ENCODE measurements at regions of chr9 and their contacts with region 1.

Region 1: DNA sequence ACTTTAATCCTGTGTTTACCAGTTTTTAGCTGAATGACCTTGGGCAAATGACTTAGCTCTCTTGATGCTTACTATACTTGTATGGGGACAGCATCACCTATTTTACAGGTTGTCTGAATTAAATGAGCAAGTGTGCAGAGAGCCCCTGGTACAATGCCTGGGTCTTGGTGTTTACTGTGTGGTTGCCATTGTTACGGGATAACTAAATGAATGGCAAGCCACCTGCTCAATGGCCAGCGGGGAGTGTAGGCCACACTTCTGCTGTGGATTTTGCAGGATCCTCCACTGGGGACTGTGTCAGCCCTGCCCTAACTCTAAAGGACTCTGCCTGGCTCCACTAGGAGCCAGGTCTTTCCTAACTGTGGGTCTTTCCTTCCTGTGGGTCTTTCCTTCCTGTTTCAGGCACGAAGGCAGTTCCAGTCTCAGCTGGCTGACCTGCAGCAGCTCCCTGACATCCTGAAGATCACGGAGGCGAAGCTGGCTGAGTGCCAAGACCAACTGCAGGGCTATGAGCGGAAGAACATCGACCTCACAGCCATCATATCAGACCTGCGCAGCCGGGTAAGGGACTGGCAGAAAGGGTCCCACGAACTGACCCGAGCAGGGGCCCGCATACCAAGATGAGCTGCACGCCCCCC is 10.3 kb upstream of the GLE1 start:
- DNase-seq: peak; percentile 93 to 97 (median 97)
- H3K4me3 ChIP-seq: peak overlapping the region in 3 of 7 experiments; percentile 3 to 60 (median 42)
- H3K27ac ChIP-seq: peak overlapping the region; percentile 69 to 81
- H3K4me1 ChIP-seq: peaks cover 17 to 34% (median 30%) of the 10 kb centered on the region in 4 experiments
- H3K27me3 ChIP-seq: no peaks in the 10 kb centered on the region

Region 2: DNA sequence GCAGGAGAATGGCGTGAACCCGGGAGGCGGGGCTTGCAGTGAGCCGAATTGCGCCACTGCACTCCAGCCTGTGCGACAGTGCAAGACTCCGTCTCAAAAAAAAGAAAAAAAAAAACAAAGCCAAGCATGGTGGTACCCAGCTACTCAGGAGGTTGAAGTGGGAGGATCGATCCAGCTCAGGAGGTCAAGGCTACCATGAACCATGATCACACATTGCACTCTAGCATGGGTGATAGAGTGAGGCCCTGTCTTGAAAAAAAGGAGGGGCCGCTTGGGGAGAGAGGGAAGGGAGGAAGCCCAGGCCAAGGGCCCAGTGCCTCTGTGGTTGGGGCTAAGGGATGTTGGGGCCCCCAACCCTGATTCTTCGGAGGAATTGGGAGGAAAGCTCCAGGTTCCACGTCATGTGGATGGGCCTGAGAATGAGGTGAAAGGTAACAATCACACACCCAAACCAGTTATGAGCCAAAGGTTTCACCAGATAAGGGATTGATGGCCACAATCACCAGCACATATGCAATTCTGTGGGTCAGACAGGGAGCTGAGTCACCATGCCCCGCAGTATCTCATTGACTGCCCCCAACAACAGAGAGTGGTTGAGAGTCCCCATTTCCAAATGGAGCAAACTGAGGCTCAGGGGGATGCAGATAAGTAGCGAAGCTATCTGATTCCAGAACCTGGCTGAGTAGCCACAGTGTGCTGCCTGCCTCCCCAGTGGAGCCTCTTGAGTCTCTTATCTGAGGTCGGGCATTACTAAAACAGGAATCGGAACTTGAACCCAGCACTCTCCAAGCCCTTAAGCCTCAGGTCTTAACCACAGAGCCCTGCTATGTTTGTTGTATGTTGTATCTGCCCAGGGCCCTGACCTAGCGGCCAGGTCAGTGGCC is 197.6 kb before region 1 on chr9:
- CTCF ChIA-PET with region 1: no interaction called
- POLR2A ChIA-PET with region 1: no interaction called
- DNase-seq: peak in 1 of 3 donors; percentile 22
- H3K4me3 ChIP-seq: no peak overlapping the region
- H3K27ac ChIP-seq: no peak overlapping the region
- H3K4me1 ChIP-seq: peaks cover 0 to 6% (median 0%) of the 10 kb centered on the region in 4 experiments
- H3K27me3 ChIP-seq: no peaks in the 10 kb centered on the region

Region 3: DNA sequence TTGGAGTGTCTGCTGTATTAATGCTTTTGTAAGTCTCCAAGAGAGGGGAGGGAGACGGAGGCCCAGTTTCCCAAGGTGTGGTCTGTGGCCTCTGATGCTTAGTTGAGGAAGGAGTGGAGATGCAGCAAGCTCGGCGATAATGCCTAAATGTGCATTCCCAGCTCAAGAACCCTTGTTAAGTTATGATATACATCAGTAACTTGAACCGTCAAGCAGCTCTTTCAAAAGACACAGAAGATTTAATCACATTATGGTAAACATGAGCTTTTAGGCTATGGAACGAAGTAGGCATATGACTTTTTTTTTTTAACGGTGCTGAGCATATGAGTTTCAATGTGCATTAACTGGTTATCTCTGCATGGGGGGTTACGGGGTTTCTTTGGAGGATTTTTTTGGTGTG is 12.1 kb before region 1 on chr9:
- CTCF ChIA-PET with region 1: interaction called, 17 read pairs
- POLR2A ChIA-PET with region 1: no interaction called
- DNase-seq: no peak
- H3K4me3 ChIP-seq: no peak overlapping the region
- H3K27ac ChIP-seq: no peak overlapping the region
- H3K4me1 ChIP-seq: no peaks in the 10 kb centered on the region
- H3K27me3 ChIP-seq: no peaks in the 10 kb centered on the region

Region 4: DNA sequence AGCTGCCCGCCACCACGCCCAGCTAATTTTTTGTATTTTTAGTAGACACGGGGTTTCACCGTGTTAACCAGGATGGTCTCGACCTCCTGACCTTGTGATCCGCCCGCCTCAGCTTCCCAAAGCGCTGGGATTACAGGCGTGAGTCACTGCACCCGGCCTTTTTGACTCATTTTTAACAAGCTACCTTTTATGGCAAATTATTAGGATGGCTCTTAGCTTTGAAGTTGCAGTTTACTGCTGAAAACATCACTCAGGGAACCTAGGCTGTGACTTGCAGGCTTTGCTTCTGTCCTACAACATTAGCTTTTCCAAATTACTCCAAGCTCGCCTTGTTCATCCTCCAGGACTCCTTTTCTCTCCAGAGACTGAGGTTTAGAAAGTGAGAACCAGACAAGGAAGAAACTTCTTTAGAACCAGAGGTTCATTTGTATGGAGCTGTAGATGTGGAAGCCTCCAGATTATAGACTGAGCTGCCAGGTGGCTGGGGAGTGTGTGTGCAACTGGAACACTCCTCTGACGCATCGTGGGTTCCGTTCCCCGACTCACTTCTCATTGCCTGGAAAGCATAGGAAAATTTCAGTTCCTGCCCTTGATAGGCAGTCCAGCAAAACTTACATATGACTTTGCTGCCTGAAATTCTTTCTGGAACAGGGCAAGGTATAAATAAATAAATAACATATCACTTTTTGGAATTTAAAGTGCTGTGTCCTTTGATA is 34.4 kb after region 1 on chr9:
- CTCF ChIA-PET with region 1: no interaction called
- POLR2A ChIA-PET with region 1: no interaction called
- DNase-seq: no peak
- H3K4me3 ChIP-seq: no peak overlapping the region
- H3K27ac ChIP-seq: no peak overlapping the region
- H3K4me1 ChIP-seq: no peaks in the 10 kb centered on the region
- H3K27me3 ChIP-seq: no peaks in the 10 kb centered on the region

Region 5: GRCh38 chr9:128607642-128608350 is 113.6 kb after region 1 on chr9:
- CTCF ChIA-PET with region 1: no interaction called
- POLR2A ChIA-PET with region 1: no interaction called
- DNase-seq: no peak
- H3K4me3 ChIP-seq: no peak overlapping the region
- H3K27ac ChIP-seq: no peak overlapping the region
- H3K4me1 ChIP-seq: no peaks in the 10 kb centered on the region
- H3K27me3 ChIP-seq: no peaks in the 10 kb centered on the region

Region 6: GRCh38 chr9:128764361-128764760 is 270.1 kb after region 1 on chr9:
- CTCF ChIA-PET with region 1: no interaction called
- POLR2A ChIA-PET with region 1: no interaction called
- DNase-seq: peak in 2 of 3 donors; percentile 73 to 78
- H3K4me3 ChIP-seq: no peak overlapping the region
- H3K27ac ChIP-seq: no peak overlapping the region
- H3K4me1 ChIP-seq: peaks cover 0 to 20% (median 11%) of the 10 kb centered on the region in 4 experiments
- H3K27me3 ChIP-seq: no peaks in the 10 kb centered on the region